ENCODE measurements at regions of chr18 and their contacts with region 1.

Region 1: DNA sequence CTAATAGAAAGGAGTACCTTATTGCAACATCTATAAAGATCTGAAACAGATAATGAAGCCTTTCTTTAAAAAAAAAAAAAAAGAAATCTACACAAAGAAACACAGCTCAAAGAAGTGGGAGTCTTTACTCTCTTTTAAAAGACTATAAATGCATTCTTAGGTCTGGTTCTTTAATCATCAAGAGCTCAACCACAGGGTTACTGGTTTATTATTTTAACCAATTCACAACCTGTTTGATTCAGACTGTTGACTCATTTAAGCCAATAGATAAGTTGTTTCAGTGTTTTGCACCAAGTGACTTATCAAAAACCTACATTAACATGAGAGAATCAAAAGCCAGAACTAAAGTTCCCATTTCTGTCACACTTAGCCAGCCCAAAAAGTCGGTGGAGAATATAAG is 93.1 kb downstream of the TCF4 start:
- DNase-seq: no peak
- ATAC-seq: no peak
- H3K4me3 ChIP-seq: no peak overlapping the region
- H3K4me3 Mint-ChIP-seq: no peak overlapping the region
- H3K27ac ChIP-seq: no peak overlapping the region
- H3K27ac Mint-ChIP-seq: no peak overlapping the region
- H3K4me1 ChIP-seq: peaks cover under 1% of the 10 kb centered on the region in 2 donors
- H3K4me1 Mint-ChIP-seq: peaks cover 4% of the 10 kb centered on the region
- H3K27me3 ChIP-seq: no peaks in the 10 kb centered on the region
- H3K27me3 Mint-ChIP-seq: peaks cover 3% of the 10 kb centered on the region
- CTCF ChIP-seq: no peak

Region 2: DNA sequence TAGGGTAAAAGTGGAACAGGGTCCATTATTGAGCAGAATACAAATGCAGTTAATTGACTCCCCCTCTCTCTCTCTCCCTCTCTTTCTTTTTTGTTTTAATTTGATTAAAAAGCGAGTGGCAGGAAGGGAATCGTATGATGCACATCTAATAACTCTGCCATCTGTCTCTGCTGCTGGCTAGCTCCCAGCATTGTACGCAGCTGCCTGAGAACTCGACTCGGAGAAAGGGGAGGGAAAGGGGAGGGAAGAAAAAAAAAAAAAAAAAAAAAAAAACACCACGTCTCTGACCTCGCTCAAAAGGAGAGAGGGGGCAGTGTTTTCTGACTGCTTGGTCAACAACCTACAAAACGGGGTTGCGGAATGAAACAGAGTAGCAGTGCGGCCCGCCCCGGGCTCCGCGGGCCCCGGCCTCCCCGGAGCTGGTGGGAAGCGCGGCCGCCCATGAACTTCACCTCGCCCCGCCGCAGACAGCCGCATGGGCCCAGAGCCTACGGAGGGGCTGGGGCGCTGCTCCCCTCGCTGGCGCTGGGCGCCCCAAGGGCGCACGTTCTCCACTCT is 172.6 kb before region 1 on chr18:
- CTCF ChIA-PET with region 1: no interaction called
- POLR2A ChIA-PET with region 1: no interaction called
- intact Hi-C with region 1: no loop called
- DNase-seq: peak; percentile 83
- ATAC-seq: peak; percentile 63
- H3K4me3 ChIP-seq: peak overlapping the region; percentile 79 to 97 (median 84)
- H3K4me3 Mint-ChIP-seq: peak overlapping the region; percentile 96
- H3K27ac ChIP-seq: peak overlapping the region; percentile 85 to 93
- H3K27ac Mint-ChIP-seq: peak overlapping the region; percentile 92
- H3K4me1 ChIP-seq: peaks cover 36 to 59% of the 10 kb centered on the region in 2 donors
- H3K4me1 Mint-ChIP-seq: peaks cover 62% of the 10 kb centered on the region
- H3K27me3 ChIP-seq: no peaks in the 10 kb centered on the region
- H3K27me3 Mint-ChIP-seq: no peaks in the 10 kb centered on the region
- CTCF ChIP-seq: no peak

Region 3: GRCh38 chr18:55477499-55477859 is 17.4 kb before region 1 on chr18:
- CTCF ChIA-PET with region 1: no interaction called
- POLR2A ChIA-PET with region 1: interaction called, 14 read pairs
- intact Hi-C with region 1: no loop called
- DNase-seq: peak; percentile 74
- ATAC-seq: peak; percentile 91
- H3K4me3 ChIP-seq: peak overlapping the region; percentile 47 to 92 (median 72)
- H3K4me3 Mint-ChIP-seq: peak overlapping the region; percentile 96
- H3K27ac ChIP-seq: peak overlapping the region; percentile 56 to 82
- H3K27ac Mint-ChIP-seq: peak overlapping the region; percentile 93
- H3K4me1 ChIP-seq: peaks cover 7 to 15% of the 10 kb centered on the region in 2 donors
- H3K4me1 Mint-ChIP-seq: peaks cover 24% of the 10 kb centered on the region
- H3K27me3 ChIP-seq: no peaks in the 10 kb centered on the region
- H3K27me3 Mint-ChIP-seq: no peaks in the 10 kb centered on the region
- CTCF ChIP-seq: peak; percentile 20